ENCODE measurements at regions of chr13 and their contacts with region 1.

Region 1: DNA sequence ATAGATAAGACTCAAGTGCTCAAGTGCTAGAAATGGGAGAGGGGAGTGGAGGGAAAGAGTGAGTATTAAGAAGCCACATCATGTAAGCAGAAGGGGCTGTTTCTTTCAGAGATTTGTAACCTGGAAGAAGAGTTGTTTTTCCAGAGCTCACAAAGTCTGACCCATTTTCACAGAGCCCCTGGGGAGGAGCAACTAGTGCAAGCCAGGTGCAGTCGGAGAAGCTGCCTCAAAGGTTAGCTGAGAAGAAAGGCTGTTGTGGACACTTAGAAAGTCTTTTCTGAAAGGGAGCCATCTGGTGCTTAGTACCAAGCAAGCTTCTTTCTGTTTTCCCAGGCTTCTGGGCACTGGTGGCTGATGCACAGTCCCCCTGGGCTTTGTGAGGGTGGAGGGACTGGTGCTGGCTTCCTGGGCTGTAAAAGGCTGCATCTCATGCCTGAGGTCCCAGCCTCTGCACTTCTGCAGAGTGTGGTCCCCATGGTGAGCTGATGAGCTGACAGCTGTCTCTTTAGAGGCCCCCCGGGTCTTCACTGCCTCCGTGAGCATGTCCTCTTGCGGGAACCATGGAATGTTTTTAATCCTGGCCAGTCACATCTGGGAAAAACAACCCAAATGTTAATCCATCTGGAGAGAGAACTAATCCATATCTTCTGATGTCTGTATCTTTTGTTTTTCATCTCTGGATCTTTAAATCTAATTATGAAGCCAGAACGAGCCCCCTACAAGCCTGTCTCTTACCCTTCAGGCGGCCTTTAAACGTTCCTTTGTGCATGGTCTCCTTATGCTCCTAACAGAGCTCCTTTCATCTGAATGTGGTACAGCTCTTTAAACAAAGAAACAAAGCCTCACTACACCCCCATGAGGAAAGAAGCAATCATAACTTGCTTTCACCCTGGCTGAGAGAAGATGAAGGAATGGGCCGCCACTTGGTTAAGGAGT is 40.2 kb downstream of the OLFM4 start:
- DNase-seq: no peak
- H3K4me3 ChIP-seq: no peak overlapping the region
- CTCF ChIP-seq: no peak

Region 2: DNA sequence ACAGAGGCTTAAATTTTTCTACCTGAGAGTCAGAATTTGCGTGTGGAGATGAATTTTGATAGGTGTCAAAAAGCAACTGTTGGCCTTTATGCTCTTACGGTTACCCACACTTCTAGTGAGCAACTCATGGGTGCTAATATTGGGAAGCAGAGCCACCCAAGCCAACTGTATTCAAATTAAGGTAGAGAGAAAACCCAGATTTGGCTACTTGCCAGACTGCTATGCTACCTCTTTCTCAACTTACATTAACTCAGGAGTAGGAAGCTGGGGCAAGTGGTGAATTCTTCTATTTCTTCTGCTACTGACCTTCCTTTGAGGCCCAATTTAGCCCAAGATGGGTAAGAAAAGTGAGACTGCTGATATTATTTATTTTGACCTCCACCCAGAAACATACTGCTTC is 43.7 kb after region 1 on chr13:
- in situ Hi-C with region 1: loop called (anchors 5 kb)
- DNase-seq: no peak
- H3K4me3 ChIP-seq: no peak overlapping the region
- CTCF ChIP-seq: no peak

Measured in astrocyte of the cerebellum (primary cell).